WTC11 (cell line): ENCODE measurements at regions of chr9 and their contacts with region 1.

Region 1: DNA sequence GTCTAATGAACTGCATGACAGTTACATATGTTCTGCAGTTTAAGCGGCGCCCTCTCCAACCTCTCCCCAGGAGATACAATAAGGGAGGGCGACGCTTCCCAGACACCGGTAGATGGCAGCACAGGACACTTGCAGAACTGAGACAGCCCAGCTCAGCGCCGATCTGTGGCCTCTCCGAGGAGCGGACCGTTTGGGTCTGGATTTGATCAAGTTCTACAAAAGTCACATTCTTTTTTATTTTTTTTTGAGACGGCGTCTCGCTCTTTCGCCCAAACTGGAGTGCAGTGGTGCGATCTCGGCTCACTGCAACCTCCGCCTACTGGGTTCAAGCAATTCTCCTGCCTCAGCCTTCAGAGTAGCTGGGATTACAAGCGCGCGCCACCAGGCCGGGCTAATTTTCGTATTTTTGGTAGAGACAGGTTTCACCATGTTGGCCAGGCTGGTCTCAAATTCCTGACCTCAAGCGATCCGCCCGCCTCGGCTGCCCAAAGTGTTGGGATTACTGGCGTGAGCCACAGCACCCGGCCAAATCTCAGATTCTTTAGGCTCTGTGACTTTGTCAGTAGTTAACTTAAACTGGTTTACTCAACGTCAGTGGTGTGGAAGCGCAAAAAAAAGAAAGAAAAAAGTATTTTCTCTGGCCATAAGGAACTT is 1.4 kb upstream of the ATOSB start:
- DNase-seq: peak; percentile 92
- ATAC-seq: peak; percentile 34
- H3K4me3 Mint-ChIP-seq: peak overlapping the region; percentile 98
- H3K27ac Mint-ChIP-seq: peak overlapping the region; percentile 96
- H3K4me1 Mint-ChIP-seq: peaks cover 28% of the 10 kb centered on the region
- H3K27me3 Mint-ChIP-seq: no peaks in the 10 kb centered on the region
- CTCF ChIP-seq: peak; percentile 69

Region 2: GRCh38 chr9:34907044-34907443 is 210.0 kb before region 1 on chr9:
- CTCF ChIA-PET with region 1: no interaction called
- POLR2A ChIA-PET with region 1: no interaction called
- DNase-seq: no peak
- ATAC-seq: peak; percentile 68
- H3K4me3 Mint-ChIP-seq: no peak overlapping the region
- H3K27ac Mint-ChIP-seq: no peak overlapping the region
- H3K4me1 Mint-ChIP-seq: peaks cover 29% of the 10 kb centered on the region
- H3K27me3 Mint-ChIP-seq: no peaks in the 10 kb centered on the region; the same call in 1 of the 2 replicates
- CTCF ChIP-seq: no peak

Region 3: DNA sequence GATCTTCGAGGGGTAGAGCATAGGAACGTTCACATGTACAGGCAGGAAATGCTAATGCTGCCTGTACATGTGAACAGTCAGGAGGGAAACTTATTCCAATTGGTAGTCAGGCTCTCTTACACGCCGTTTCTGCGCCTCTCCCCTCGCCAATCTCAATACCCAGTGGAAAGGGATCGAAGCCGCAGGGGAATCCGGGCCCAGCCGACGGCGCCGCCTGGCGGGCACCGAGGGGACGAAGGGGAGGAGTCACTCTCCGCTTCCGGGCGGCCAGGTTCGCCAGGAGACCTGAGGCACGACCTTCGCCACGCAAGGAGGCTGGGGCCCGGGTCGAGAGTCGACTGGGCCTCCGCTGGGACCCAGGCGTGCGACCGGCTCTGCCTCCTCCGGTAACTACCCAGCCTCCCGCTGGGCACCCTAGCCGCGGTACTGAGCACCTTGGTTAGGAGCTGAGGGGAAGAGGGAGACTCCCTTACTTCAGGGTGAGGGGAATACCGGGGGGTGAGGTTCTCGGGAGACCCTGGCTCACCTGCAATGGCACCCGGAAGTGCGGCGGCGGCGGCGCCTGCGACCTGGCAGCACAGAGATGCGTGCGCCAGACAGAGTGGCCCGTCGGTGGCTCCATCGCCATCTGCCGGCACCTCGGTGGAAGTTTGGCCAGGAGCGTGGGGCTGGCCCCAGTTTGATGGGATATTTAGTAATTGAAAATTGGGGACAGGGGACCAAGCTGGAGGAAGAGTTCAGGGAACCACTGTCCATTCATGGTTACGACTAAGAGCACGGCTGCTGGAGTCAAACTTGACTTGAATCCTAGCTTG is 20.8 kb before region 1 on chr9 and contains the start of gene PIGO:
- CTCF ChIA-PET with region 1: interaction called, 19 read pairs
- POLR2A ChIA-PET with region 1: interaction called, 3 read pairs
- DNase-seq: peak; percentile 91
- ATAC-seq: peak; percentile 91
- H3K4me3 Mint-ChIP-seq: peak within 1 kb of the TSS; percentile 85
- H3K27ac Mint-ChIP-seq: peak within 1 kb of the TSS; percentile 92
- H3K4me1 Mint-ChIP-seq: no peaks in the 10 kb centered on the region
- H3K27me3 Mint-ChIP-seq: no peaks in the 10 kb centered on the region
- CTCF ChIP-seq: peak; percentile 64
- total RNA-seq, gene PIGO: 23.8 to 33.3 TPM (median 31.3 TPM) in 3 replicates

Region 4: DNA sequence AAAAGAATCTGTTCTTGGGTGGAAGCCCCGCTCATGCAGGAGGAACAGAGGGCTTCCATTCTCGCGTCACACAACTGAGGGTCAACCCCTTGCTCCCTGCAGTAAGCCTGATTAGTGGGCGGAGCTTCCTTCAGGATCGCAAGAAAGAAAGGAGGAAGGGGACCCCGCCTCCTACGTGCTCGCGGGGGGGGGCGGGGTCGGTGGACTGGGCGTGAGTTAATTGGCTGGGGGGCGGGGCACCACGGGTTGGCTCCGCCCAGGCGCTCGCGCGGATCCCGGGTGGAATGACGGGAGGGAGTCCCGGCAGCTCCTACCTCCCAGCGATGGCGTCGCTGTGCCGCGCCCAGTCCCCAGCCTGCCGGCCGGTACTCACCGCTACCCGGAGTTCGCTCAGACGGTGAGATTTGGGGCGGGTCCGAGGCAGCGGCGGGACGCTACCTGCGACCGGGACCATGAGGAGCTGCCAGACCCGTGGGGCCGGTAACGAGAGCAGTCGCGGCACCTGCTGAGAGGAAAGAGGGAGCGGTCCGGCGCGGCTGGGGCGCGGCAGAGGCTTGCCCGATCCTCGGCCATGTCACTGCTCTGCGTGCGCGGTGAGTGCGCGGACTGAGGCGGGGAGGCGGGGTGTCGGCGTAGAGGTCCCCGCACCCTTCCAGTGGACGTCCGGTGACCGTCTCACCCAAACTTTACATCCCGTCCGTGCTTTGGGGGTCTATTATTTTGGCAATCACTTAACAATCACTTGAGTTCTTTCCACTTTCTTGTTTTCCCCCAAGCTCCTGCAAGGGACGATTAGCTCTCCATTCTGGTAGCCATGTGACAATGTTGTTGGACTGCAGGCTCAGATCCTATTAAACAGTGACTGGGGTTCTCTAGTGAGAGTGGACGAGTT is 44.9 kb after region 1 on chr9 and contains the start of gene UNC13B:
- CTCF ChIA-PET with region 1: interaction called, 19 read pairs
- POLR2A ChIA-PET with region 1: interaction called, 7 read pairs
- DNase-seq: peak; percentile 94
- ATAC-seq: peak; percentile 94
- H3K4me3 Mint-ChIP-seq: peak within 1 kb of the TSS; percentile 96
- H3K27ac Mint-ChIP-seq: peak within 1 kb of the TSS; percentile 99
- H3K4me1 Mint-ChIP-seq: peaks cover 42% of the 10 kb centered on the region
- H3K27me3 Mint-ChIP-seq: no peaks in the 10 kb centered on the region
- CTCF ChIP-seq: no peak
- total RNA-seq, gene UNC13B: 46.1 to 51.8 TPM (median 49.3 TPM) in 3 replicates

Region 5: DNA sequence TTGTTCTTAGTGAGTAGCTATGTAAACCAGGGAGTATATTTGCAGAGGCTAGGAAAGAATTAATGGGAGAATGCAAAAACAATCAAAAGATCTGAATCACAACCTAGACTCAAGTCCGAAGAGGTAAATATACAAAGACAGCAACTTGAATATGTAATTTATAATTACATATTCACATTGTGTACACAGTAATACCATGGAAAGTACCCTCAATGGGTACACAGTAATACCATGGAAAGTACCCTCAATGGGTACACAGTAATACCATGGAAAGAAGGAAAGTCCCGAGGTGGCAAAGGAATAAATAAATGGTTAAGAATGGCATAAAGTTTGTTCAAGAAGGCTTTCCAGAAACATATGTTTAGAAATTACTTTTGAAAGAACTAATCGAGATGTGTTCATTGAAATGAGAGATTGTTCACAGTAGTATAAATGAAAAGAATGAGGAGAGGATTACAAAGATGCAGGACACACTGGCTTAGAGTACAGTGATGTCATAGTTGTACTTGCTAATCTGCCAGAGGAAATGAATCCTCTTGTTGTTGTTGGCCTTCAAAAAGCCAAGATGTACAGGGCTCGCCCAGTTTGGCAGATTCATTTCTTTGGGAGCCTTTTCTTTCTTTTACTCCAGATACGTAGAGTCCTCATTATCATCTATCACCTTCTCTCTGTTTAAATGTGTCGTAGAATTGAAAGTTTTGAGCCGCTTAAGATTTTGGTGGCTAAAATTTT is 160.8 kb after region 1 on chr9:
- CTCF ChIA-PET with region 1: interaction called, 20 read pairs
- POLR2A ChIA-PET with region 1: no interaction called
- DNase-seq: no peak
- ATAC-seq: no peak
- H3K4me3 Mint-ChIP-seq: no peak overlapping the region
- H3K27ac Mint-ChIP-seq: no peak overlapping the region
- H3K4me1 Mint-ChIP-seq: no peaks in the 10 kb centered on the region
- H3K27me3 Mint-ChIP-seq: no peaks in the 10 kb centered on the region; the same call in 1 of the 2 replicates
- CTCF ChIP-seq: no peak

Region 6: DNA sequence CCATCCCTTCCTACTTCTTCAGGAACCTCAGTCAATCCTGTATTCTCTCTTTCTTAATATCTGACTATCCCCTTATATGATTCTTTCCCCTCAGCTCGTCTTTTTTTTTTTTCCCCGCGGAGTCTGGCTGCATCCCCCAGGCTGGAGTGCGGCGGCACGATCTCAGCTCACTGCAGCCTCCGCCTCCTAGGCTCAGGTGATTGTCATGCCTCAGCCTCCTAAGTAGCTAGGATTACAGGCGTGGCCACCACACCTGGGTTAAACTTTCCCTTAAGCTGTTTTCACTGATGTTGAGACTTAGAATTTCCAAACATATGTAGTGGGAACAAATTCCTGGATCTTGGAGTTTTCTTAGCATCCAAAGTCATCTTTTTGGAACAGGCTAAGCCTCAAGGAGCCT is 359.6 kb after region 1 on chr9:
- CTCF ChIA-PET with region 1: interaction called, 10 read pairs
- POLR2A ChIA-PET with region 1: no interaction called
- DNase-seq: no peak
- ATAC-seq: no peak
- H3K4me3 Mint-ChIP-seq: no peak overlapping the region
- H3K27ac Mint-ChIP-seq: no peak overlapping the region
- H3K4me1 Mint-ChIP-seq: 0 out of 2 replicates have a peak, but pooled peaks cover 3% of the 10 kb centered on the region
- H3K27me3 Mint-ChIP-seq: peaks cover 12% of the 10 kb centered on the region
- CTCF ChIP-seq: no peak